Adrenal gland (tissue), 19 donors: ENCODE measurements at regions of chr11 and their contacts with region 1.

Region 1: DNA sequence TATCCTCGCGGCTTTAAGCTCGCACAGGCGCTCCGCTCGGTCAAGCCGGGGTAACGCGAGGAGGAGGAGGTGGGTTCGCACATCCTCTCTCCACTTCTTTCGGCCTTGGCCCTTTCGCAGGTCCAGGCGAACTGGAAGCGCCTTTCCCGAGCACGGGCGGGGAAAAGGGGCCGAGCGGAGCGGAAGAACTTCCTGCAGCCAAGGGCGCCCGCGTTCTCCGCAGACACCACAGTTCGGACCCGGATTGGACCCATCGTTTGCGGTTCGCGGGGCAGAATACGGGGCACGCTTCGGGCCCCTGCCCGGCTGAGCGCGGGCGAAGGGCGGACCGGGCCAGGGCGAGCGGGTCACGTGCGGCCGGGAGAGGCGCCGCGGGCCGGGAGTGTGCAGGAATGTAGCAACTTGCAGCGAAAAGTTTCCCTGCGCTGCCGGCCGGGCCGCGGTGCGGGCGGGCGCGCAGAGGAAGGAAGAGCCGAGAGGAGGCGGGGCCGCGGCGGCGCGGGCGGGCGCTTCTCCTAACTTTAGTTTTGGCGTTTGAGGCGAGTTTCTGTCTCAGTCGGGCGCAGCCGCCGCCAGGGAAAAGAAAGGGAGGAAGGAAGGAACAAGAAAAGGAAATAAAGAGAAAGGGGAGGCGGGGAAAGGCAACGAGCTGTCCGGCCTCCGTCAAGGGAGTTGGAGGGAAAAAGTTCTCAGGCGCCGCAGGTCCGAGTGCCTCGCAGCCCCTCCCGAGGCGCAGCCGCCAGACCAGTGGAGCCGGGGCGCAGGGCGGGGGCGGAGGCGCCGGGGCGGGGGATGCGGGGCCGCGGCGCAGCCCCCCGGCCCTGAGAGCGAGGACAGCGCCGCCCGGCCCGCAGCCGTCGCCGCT is at the start of gene YAP1:
- DNase-seq: peak; percentile 84 to 90 (median 87)
- H3K4me3 ChIP-seq: peak within 1 kb of the TSS; percentile 45 to 74 (median 63)
- H3K27ac ChIP-seq: peak within 1 kb of the TSS; percentile 74 to 96 (median 94)
- H3K4me1 ChIP-seq: peaks cover 0 to 29% of the 10 kb centered on the region in 2 donors
- H3K27me3 ChIP-seq: no peaks in the 10 kb centered on the region
- CTCF ChIP-seq: no peak
- POLR2A ChIP-seq: peak in 1 of 2 donors; percentile 82
- total RNA-seq, gene YAP1: 34.9 to 135 (median 102) TPM

Region 2: DNA sequence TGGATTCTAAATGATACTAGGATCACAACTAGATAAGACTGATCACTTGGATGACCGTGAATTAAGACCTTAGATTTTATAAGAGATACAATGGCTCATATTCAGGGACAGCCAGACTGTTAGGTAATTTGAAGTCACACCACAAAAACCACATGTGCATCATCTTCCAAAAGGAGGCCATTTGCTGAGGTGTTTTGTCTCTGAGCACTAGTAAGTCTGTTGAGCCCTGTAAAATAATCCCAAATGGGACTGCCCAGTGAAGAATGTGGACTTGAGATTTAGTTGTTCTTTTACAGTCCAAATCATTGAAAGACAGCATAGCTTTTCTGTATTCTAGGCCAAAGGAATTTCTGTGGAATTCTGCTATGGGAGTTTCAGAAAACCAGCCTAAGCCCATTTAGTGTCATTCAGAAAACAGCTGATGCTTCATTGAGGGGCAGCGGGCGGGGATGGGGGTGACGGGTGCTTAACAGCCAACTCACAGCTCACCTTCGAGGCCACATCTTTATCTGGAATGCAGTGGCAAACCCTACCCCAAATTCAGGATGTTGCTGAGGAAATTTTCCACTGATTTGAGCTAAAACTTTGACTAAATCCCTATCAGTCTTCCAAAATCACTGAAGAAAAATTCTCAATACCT is 127.1 kb after region 1 on chr11:
- intact Hi-C with region 1: loop called in 1 of 2 experiments (anchors 10 kb)
- DNase-seq: no peak
- H3K4me3 ChIP-seq: no peak overlapping the region
- H3K27ac ChIP-seq: no peak overlapping the region
- H3K4me1 ChIP-seq: no peaks in the 10 kb centered on the region
- H3K27me3 ChIP-seq: no peaks in the 10 kb centered on the region
- CTCF ChIP-seq: no peak
- POLR2A ChIP-seq: no peak

Region 3: DNA sequence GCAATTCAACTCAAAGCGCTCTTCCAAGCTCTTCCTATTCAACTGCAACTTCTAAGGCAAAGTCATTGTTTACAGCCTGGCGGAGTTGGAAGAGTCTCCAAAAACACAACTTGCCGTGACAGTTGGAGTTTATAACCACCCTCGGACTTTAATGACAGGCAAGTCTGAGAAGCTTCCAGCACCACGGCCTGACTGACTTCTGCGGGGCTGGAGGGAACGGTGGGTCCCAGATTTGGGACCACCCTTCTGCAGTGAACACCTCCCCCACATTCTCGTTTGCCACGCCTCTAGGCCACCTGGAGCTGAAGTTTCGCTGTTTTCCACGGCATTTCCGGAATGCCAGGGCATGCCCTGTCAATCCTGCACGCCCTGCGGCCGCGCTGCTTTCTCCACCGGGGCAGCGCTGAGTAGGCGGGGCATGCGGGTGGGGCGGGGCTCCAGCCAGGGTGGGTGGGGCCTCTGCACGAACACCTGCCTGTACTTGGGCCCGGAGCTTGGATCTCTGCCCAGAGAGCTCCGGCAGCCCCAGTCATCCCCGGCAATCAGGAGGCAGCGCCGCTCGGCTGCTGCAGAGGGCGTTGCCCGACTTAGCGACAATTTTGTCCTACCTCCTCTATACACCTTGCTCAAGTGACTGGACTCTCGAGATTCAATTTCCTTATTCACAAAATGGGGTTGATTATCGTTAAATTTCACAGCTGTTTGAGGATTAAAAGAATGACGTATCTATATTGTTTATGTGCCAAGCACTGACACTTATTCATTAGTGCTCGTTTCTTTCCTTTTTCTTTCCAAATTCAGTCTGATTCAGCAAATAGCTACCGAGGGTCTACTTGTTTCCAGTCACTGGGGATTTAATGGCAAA is 158.4 kb after region 1 on chr11:
- intact Hi-C with region 1: loop called in 1 of 2 experiments (anchors 10 kb)
- DNase-seq: peak; percentile 85 to 94 (median 90)
- H3K4me3 ChIP-seq: peak overlapping the region in 2 of 4 donors; percentile 6 to 49
- H3K27ac ChIP-seq: peak overlapping the region in 3 of 5 donors; percentile 4 to 51 (median 33)
- H3K4me1 ChIP-seq: peaks cover 3 to 4% of the 10 kb centered on the region in 2 donors
- H3K27me3 ChIP-seq: no peaks in the 10 kb centered on the region
- CTCF ChIP-seq: peak; percentile 38 to 59 (median 53)
- POLR2A ChIP-seq: no peak

Region 4: GRCh38 chr11:102287964-102288724 is 178.0 kb after region 1 on chr11:
- intact Hi-C with region 1: no loop called
- DNase-seq: peak; percentile 32 to 75 (median 47)
- H3K4me3 ChIP-seq: peak overlapping the region in 1 of 4 donors; percentile 39
- H3K27ac ChIP-seq: no peak overlapping the region
- H3K4me1 ChIP-seq: peaks cover 0 to 14% of the 10 kb centered on the region in 2 donors
- H3K27me3 ChIP-seq: no peaks in the 10 kb centered on the region
- CTCF ChIP-seq: peak; percentile 72 to 86 (median 79)
- POLR2A ChIP-seq: no peak

Region 5: GRCh38 chr11:102620818-102621561 is 510.9 kb after region 1 on chr11:
- intact Hi-C with region 1: no loop called
- DNase-seq: no peak
- H3K4me3 ChIP-seq: no peak overlapping the region
- H3K27ac ChIP-seq: no peak overlapping the region
- H3K4me1 ChIP-seq: no peaks in the 10 kb centered on the region
- H3K27me3 ChIP-seq: peaks cover 3% of the 10 kb centered on the region
- CTCF ChIP-seq: no peak
- POLR2A ChIP-seq: no peak